A673 (cell line): ENCODE measurements at regions of chr10 and their contacts with region 1.

Region 1: DNA sequence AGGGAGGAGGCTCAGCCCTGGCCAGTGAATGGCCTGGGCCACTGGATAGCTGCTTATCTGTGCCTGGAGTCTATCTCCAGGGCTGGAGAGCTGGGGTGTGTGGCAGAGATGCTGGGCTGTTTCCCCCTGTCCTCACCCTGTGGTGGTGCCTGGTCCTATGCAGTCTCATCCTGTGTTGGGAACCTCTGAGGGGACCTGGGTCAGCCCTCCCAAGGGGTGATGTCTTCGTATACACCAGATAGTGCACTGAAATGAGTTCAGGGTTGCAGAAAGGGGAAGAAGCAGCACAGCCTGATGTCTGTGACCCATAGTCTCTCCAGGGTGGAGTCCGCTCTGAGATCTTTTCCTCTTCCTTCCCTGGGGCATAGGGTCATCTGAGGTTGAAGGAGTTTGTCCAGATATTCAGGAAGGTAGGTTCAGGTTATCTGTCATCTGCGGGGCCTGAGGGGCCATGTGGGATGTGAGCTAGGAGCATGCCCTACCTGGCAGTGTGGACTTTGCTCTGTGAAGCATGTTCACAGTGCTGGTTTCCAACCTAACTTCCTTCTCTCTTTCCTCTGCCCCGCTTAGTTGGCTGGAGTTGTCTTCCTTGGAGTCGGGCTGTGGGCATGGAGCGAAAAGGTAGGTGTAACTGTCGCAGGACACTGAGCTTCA is 33.4 kb upstream of the SH2D4B start:
- DNase-seq: no peak
- H3K4me3 ChIP-seq: no peak overlapping the region
- H3K27ac ChIP-seq: no peak overlapping the region
- H3K4me1 ChIP-seq: no peaks in the 10 kb centered on the region
- H3K27me3 ChIP-seq: no peaks in the 10 kb centered on the region
- CTCF ChIP-seq: no peak

Region 2: DNA sequence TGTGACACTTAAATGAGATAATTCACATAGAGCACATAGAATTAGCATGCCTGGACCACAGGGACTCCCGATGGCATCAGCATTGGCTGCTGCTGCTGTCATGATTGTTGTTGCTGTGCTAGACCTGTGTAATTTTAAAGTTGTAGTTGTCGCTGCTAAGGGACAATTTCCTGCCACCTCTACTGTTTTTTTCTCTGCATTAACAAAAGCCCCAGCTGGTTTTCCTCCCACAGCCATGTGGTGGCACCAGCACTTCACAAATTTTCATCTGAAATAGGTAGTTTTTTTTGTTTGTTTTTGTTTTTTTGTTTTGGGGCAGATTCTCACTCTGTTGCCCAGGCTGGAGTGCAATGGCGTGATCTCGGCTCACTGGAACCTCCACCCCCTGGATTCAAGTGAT is 121.3 kb before region 1 on chr10:
- CTCF ChIA-PET with region 1: interaction called, 7 read pairs
- POLR2A ChIA-PET with region 1: no interaction called
- intact Hi-C with region 1: loop called (anchors 1 kb)
- DNase-seq: peak; percentile 62
- H3K4me3 ChIP-seq: no peak overlapping the region
- H3K27ac ChIP-seq: no peak overlapping the region
- H3K4me1 ChIP-seq: no peaks in the 10 kb centered on the region
- H3K27me3 ChIP-seq: no peaks in the 10 kb centered on the region
- CTCF ChIP-seq: peak; percentile 71

Region 3: DNA sequence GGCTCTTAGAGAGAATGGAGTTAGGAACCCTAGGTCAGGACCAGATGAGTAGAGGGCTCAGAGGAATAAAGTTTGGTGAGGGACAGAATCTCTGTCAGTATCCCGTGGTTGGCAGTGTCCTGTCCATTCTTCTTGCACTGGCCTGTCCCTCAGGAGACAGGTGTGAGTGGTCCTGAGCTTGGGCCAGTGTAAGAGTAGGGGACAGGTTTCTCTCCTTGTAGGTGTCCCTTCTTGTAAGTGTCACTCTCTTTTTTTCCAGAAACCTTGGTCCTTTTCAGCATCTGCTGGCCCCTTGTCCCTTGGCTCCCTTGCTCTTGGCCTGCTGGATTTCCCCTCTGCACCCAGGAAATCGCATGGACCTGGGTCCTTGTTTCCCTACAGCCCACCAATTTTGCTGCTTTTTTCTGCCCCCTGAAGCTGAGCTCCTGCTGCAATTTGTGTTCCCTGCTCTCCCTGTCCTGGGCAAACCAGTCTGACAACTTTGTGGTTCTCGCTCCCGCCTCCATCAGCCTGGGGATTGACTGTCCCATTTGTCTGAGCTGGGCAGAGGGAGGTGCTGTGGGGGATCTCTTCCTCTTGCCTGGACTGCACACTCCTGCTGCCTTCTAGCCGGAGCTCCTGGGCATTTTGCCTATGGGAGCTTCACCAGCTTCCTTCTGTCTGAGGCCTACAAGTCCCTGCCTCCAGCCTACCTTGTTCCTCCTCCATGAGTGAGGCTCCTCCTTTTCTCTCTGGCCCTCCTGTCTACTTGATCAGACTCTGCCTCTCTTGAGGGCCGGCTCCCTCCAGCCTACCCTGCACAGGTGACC is 43.7 kb before region 1 on chr10:
- CTCF ChIA-PET with region 1: interaction called, 12 read pairs
- POLR2A ChIA-PET with region 1: no interaction called
- intact Hi-C with region 1: loop called (anchors 5 kb)
- DNase-seq: peak; percentile 29
- H3K4me3 ChIP-seq: no peak overlapping the region
- H3K27ac ChIP-seq: peak overlapping the region; percentile 53
- H3K4me1 ChIP-seq: peaks cover 73% of the 10 kb centered on the region
- H3K27me3 ChIP-seq: no peaks in the 10 kb centered on the region
- CTCF ChIP-seq: no peak

Region 4: GRCh38 chr10:80484243-80484642 is 20.0 kb before region 1 on chr10:
- CTCF ChIA-PET with region 1: interaction called, 10 read pairs
- POLR2A ChIA-PET with region 1: no interaction called
- intact Hi-C with region 1: no loop called
- DNase-seq: no peak
- H3K4me3 ChIP-seq: no peak overlapping the region
- H3K27ac ChIP-seq: no peak overlapping the region
- H3K4me1 ChIP-seq: peaks cover 15% of the 10 kb centered on the region
- H3K27me3 ChIP-seq: no peaks in the 10 kb centered on the region
- CTCF ChIP-seq: no peak

Region 5: GRCh38 chr10:80493522-80494051 is 10.7 kb before region 1 on chr10:
- CTCF ChIA-PET with region 1: interaction called, 11 read pairs
- POLR2A ChIA-PET with region 1: no interaction called
- intact Hi-C with region 1: no loop called
- DNase-seq: peak; percentile 91
- H3K4me3 ChIP-seq: no peak overlapping the region
- H3K27ac ChIP-seq: peak overlapping the region; percentile 18
- H3K4me1 ChIP-seq: peaks cover 31% of the 10 kb centered on the region
- H3K27me3 ChIP-seq: no peaks in the 10 kb centered on the region
- CTCF ChIP-seq: no peak

Region 6: GRCh38 chr10:80739963-80740715 is 235.9 kb after region 1 on chr10:
- CTCF ChIA-PET with region 1: no interaction called
- POLR2A ChIA-PET with region 1: no interaction called
- intact Hi-C with region 1: no loop called
- DNase-seq: no peak
- H3K4me3 ChIP-seq: no peak overlapping the region
- H3K27ac ChIP-seq: no peak overlapping the region
- H3K4me1 ChIP-seq: no peaks in the 10 kb centered on the region
- H3K27me3 ChIP-seq: no peaks in the 10 kb centered on the region
- CTCF ChIP-seq: no peak